Heart right ventricle (tissue), 16 donors: ENCODE measurements at regions of chr6 and their contacts with region 1.

Region 1: DNA sequence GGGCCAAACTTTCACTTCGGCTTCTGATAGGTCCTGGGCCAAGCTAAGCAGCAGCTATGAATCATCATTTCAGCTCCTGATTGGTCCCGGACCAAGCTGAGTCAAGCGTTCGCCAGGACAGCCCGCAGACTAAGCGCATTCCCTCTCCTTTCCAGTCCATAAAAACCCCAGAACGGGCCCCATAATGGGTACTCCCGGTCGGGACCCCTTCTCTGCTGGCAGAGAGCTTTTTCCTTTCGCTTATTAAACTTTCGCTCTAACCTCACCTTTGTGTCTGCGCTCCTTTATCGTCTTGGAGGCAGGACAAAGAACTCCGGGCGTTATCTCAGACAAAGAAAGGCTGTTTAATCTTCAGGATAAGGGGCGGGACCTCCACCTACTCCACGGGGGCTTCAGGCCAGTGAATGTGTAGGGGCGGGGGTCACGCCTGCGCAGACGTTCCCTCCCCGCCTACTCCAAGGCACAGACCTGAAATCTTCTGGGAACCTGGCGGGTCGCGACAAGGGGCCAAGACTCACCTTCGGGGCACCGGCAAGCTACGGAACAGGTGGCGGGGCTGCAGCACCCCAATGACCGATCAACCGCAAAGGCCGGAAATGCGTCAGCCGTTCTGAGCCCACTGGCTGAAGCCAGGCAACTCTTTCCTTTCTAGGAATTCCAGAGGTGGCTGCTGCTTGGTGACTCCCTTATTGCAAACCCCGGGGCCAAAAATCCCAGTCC is at the start of gene ZSCAN31:
- DNase-seq: peak; percentile 87 to 97
- ATAC-seq: peak; percentile 95 to 99 (median 97)
- H3K4me3 ChIP-seq: peak within 1 kb of the TSS; percentile 56 to 90 (median 66)
- H3K27ac ChIP-seq: peak within 1 kb of the TSS; percentile 88 to 97 (median 92)
- H3K4me1 ChIP-seq: peaks cover 0 to 25% (median 11%) of the 10 kb centered on the region in 9 donors
- H3K27me3 ChIP-seq: no peaks in the 10 kb centered on the region
- CTCF ChIP-seq: no peak
- total RNA-seq, gene ZSCAN31: 8.0 to 17.4 (median 11.9) TPM

Region 2: DNA sequence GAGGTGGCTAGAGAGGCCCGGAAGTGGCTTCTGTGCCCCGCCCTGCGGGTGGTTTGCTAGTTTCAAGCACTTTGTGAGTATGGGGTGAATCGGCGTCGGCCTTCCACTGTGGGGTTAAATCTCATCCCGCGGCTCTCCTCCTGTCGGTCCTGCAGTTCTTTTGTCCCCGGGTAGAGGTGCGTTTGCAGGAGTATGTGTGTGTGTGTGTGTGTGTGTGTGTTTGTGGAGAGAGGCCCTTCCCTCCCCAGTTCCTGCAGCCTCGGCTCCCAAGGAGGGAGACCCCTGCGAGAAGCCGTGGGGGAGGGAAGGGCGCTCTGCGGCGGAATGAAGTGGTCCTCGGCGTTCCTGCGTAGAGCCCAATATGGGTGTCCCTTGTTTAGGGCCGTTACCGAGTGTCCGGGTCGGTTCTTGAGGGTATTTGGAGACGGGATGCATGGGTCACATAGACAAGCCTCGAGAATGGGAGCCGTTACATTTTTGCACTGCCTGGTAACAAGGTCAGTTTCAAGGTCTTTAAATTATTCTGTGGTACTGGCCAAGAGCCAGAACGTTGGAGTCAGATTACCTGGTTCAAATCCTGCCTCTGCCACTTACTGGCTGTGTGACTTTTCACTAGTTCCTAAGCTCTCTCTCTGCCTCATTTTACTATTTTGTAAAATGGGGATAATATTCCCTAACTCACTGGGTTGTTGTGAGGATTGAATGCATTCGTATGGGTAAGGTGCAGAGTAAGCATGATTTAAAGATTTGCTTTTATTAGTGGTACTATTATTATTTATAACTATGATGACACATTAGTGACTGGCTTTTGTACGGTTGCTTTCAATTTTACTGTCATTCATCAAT is 14.4 kb after region 1 on chr6 and contains the start of gene ZKSCAN3:
- intact Hi-C with region 1: loop called in 1 of 10 experiments (anchors 2 kb)
- DNase-seq: peak; percentile 82 to 85
- ATAC-seq: peak; percentile 93 to 97 (median 96)
- H3K4me3 ChIP-seq: peak within 1 kb of the TSS; percentile 61 to 88 (median 78)
- H3K27ac ChIP-seq: peak within 1 kb of the TSS; percentile 28 to 90 (median 78)
- H3K4me1 ChIP-seq: peaks cover 3 to 36% (median 24%) of the 10 kb centered on the region in 9 donors
- H3K27me3 ChIP-seq: no peaks in the 10 kb centered on the region
- CTCF ChIP-seq: no peak
- total RNA-seq, gene ZKSCAN3: 3.1 to 6.8 (median 5.1) TPM